CD14-positive monocyte (primary cell): ENCODE measurements at regions of chr10 and their contacts with region 1.

Region 1: DNA sequence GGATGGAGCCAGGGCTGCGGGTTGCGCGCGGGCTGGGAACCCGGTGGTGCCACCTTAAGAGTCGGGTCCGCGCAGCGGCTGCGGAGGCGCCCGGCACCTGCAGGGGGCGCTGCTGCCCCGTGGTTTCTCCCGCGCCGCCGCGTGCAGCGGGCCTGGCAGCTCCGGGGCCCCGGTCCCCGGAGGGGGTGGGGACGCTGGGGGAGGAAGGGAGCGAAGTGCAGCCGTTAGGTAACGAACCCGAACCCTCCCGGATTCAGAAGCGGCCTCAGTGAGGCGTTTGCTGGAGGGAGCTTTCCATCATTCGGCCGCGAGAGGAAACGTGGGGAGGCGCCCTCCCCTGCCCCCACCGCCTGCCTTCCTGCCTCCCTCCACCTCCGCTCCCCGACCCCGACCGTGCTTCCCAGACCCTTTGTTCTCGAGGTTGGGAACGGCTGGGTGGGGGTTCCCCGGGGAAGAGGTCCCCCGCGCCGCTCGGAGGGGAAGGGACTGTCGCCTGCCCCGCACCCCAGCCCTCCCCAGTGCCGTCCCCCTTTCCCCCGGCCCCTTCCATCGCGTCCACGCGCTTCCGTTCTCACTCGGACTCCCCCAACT is 29.6 kb downstream of the SKIDA1 start:
- DNase-seq: peak; percentile 70 to 77 (median 77)
- H3K4me3 ChIP-seq: peak overlapping the region; percentile 52 to 84 (median 59)
- H3K4me3 Mint-ChIP-seq: peak overlapping the region; percentile 85 to 96
- H3K27ac ChIP-seq: no peak overlapping the region
- H3K27ac Mint-ChIP-seq: no peak overlapping the region
- H3K4me1 ChIP-seq: peaks cover 45 to 53% of the 10 kb centered on the region in 2 donors
- H3K4me1 Mint-ChIP-seq: peaks cover 38% of the 10 kb centered on the region
- H3K27me3 ChIP-seq: peaks cover 28 to 60% of the 10 kb centered on the region in 2 donors
- H3K27me3 Mint-ChIP-seq: peaks cover 51 to 74% (median 58%) of the 10 kb centered on the region in 3 donors
- CTCF ChIP-seq: peak; percentile 96

Region 2: GRCh38 chr10:21533467-21534279 is 37.8 kb after region 1 on chr10 and contains the start of gene MLLT10:
- intact Hi-C with region 1: no loop called
- DNase-seq: peak; percentile 90 to 91 (median 91)
- H3K4me3 ChIP-seq: peak within 1 kb of the TSS; percentile 55 to 93 (median 91)
- H3K4me3 Mint-ChIP-seq: peak within 1 kb of the TSS; percentile 95 to 98
- H3K27ac ChIP-seq: peak within 1 kb of the TSS; percentile 81 to 82
- H3K27ac Mint-ChIP-seq: peak within 1 kb of the TSS; percentile 75 to 95 (median 92)
- H3K4me1 ChIP-seq: peaks cover 15 to 21% of the 10 kb centered on the region in 2 donors
- H3K4me1 Mint-ChIP-seq: peaks cover 25% of the 10 kb centered on the region
- H3K27me3 ChIP-seq: no peaks in the 10 kb centered on the region
- H3K27me3 Mint-ChIP-seq: no peaks in the 10 kb centered on the region
- CTCF ChIP-seq: peak; percentile 23
- polyA plus RNA-seq, gene MLLT10: 4.9 to 39.1 (median 7.5) TPM

Region 3: DNA sequence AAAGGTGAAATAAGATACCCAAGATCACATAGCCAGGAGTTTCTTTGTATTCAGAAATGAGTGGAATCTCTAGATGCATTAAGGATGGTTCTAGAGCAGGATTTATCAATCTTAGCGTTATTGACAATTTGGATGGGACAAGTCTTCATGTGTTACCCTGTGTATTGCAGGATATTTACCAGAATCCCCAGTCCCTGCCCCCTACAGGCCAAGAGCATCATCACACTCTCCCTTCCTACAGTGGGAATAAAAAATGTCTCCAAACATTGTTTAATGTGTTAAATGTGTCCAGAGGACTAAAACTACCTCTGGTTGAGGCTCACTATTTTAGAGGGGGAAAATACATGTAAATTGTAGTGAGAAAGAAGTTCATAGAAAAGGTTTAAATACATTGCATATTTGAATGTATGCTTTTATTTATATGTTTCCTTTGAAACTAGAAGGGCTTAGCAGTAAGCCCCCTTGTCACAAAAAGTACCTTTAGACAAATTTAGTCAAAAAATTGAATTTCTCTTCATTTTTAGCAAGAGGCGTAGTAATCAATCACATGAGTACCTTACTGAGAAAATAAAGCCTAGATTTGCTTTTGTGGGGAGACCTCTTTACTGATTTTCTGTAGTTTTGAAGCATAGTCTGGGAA is 179.4 kb after region 1 on chr10:
- intact Hi-C with region 1: loop called in 1 of 2 experiments (anchors 10 kb)
- DNase-seq: peak; percentile 12 to 37 (median 27)
- H3K4me3 ChIP-seq: no peak overlapping the region
- H3K4me3 Mint-ChIP-seq: no peak overlapping the region
- H3K27ac ChIP-seq: no peak overlapping the region
- H3K27ac Mint-ChIP-seq: no peak overlapping the region
- H3K4me1 ChIP-seq: no peaks in the 10 kb centered on the region
- H3K4me1 Mint-ChIP-seq: peaks cover 2% of the 10 kb centered on the region
- H3K27me3 ChIP-seq: no peaks in the 10 kb centered on the region
- H3K27me3 Mint-ChIP-seq: no peaks in the 10 kb centered on the region
- CTCF ChIP-seq: peak; percentile 93

Region 4: DNA sequence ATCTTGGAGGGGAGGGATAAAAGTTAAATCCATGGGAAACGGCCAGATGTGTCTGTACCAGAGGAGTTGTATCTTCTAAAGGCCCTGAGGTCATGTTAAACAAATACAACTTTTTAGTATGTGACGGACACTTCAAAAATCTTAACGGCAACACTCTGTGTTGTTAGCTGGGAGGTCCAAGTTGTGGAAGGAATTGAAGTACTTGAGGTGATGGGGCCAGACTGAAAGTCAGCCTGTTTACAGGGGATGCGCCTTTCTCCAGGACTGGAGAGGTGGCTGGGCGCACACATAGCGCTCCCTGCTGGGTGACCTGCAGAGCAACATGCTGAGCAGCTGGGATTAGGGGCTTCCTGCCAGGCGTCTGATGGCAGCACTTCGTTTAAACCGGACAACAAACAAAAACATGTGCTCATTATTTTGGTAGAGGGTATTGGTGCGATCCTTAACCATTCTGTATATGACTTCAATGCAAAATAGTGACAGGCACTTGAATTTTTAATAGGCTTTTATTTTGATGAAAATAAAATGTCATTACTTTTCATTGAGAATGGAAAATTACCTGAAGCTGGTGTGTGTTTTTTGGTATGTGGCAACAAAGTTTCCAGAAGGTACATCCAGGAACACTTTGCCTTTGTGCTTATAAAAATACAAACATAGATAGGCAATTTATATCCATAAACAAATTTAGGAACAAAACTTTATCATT is 236.4 kb after region 1 on chr10:
- intact Hi-C with region 1: loop called (anchors 2 to 10 kb)
- DNase-seq: peak; percentile 28 to 50 (median 46)
- H3K4me3 ChIP-seq: no peak overlapping the region
- H3K4me3 Mint-ChIP-seq: no peak overlapping the region
- H3K27ac ChIP-seq: no peak overlapping the region
- H3K27ac Mint-ChIP-seq: no peak overlapping the region
- H3K4me1 ChIP-seq: no peaks in the 10 kb centered on the region
- H3K4me1 Mint-ChIP-seq: peaks cover 11% of the 10 kb centered on the region
- H3K27me3 ChIP-seq: no peaks in the 10 kb centered on the region
- H3K27me3 Mint-ChIP-seq: no peaks in the 10 kb centered on the region
- CTCF ChIP-seq: peak; percentile 75

Region 5: DNA sequence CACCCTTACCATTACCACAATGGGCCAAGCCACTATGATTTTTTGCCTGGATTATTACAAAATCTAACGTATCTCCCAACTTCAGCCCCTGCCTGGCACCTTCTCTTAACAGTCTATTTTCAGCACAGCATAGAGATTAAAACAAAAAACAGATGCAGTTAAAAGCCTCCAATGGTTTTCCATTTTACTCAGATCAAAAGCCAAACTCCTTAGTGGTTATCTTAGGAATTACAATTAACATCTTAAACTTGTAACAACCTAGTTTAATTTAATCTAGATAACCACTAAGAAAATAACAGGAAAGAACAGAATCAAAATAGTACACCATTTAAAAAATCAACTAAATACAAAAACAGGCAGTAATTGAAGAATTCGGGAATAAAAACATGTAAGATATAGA is 464.2 kb after region 1 on chr10:
- intact Hi-C with region 1: loop called in 1 of 2 experiments (anchors 5 kb)
- DNase-seq: no peak
- H3K4me3 ChIP-seq: no peak overlapping the region
- H3K4me3 Mint-ChIP-seq: no peak overlapping the region
- H3K27ac ChIP-seq: no peak overlapping the region
- H3K27ac Mint-ChIP-seq: no peak overlapping the region
- H3K4me1 ChIP-seq: peaks cover under 1 to 1% of the 10 kb centered on the region in 2 donors
- H3K4me1 Mint-ChIP-seq: peaks cover 9% of the 10 kb centered on the region
- H3K27me3 ChIP-seq: no peaks in the 10 kb centered on the region
- H3K27me3 Mint-ChIP-seq: peaks cover 0 to 4% (median 1%) of the 10 kb centered on the region in 3 donors
- CTCF ChIP-seq: peak; percentile 10